ENCODE measurements at regions of chr2 and their contacts with region 1.

Region 1: GRCh38 chr2:135728064-135728743 is 13.5 kb upstream of the UBXN4 start:
- DNase-seq: no peak
- ATAC-seq: no peak

Region 2: GRCh38 chr2:134988994-134989605 is 739.1 kb before region 1 on chr2:
- intact Hi-C with region 1: loop called in 1 of 2 experiments (anchors 10 kb)
- DNase-seq: no peak
- ATAC-seq: peak; percentile 45 to 70

Measured in left cardiac atrium (tissue), 4 donors.